ENCODE measurements at regions of chr19 and their contacts with region 1.

Region 1: DNA sequence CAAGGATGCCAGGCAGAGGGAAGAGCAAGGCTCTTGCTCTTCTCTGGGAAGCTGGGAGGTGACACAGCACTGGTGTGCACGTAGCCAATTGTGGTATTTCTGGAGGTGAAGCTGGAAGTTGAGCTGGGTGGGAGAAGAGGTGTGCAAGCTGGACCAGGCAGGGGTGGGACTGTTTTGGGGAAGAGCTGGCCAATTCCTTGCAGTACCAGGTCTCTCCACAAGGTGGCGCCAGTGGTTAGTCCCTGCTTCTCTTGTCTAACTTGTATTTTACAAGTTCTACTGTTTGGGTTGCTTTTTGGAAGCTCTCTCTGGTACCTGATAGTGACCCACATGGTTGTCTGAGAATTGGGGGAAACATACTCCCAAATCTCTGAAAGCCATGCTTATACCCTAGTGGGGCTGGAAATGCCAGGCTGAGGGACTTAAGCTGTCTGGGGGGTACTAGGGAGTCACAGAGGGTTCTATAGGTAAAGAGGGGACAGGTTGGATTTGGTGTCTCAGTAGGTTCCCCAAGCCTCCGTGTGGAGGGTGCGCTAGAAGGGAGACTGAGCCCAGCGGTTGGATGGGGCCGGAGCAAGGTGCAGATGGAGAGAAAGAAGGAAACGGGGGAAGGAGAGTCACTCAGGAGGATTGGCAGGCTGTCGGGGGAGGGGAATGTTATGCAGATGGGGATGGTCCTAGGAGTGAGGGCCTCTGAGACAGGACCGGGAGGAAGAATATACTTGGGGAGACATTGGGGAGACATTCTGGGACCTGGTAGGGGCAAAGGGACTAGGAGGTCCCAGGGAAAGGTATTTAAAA is 3.0 kb downstream of the HPN start:
- DNase-seq: no peak
- H3K4me3 ChIP-seq: no peak overlapping the region
- H3K27ac ChIP-seq: no peak overlapping the region
- H3K27me3 ChIP-seq: peaks cover 7% of the 10 kb centered on the region
- CTCF ChIP-seq: peak; percentile 94

Region 2: GRCh38 chr19:35030257-35031071 is 14.1 kb before region 1 on chr19 and contains the start of gene SCN1B:
- CTCF ChIA-PET with region 1: interaction called, 15 read pairs
- POLR2A ChIA-PET with region 1: no interaction called
- DNase-seq: no peak
- H3K4me3 ChIP-seq: peak within 1 kb of the TSS; percentile 63
- H3K27ac ChIP-seq: no peak within 1 kb of the TSS
- H3K27me3 ChIP-seq: no peaks in the 10 kb centered on the region
- CTCF ChIP-seq: no peak
- polyA plus RNA-seq, gene SCN1B: 5.7 and 5.8 TPM in 2 replicates

Region 3: DNA sequence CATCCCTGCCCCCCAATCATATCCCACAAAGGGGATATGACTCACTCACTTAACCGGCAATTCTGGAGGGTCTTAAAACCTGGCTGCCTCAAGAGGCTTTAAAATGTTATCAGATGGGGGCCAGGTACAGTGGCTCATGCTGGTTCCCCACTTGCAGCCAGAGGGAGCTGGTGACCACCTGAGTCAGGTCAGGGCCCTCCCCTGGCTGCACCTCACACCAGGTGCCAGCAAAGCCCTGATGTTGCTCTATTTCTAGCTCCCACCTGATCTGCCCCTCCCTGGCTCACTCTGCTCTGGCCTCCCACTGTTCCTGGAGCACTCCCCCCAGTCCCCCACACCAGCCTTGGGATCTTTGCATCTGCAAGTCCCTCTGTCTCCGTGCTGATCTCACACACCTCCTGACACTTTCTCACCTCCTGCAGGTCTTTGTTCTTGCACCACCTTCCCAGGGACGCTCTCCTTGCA is 11.2 kb after region 1 on chr19:
- CTCF ChIA-PET with region 1: interaction called, 17 read pairs
- POLR2A ChIA-PET with region 1: interaction called, 3 read pairs
- DNase-seq: no peak
- H3K4me3 ChIP-seq: no peak overlapping the region
- H3K27ac ChIP-seq: no peak overlapping the region
- H3K27me3 ChIP-seq: peaks cover 16% of the 10 kb centered on the region
- CTCF ChIP-seq: no peak

Region 4: DNA sequence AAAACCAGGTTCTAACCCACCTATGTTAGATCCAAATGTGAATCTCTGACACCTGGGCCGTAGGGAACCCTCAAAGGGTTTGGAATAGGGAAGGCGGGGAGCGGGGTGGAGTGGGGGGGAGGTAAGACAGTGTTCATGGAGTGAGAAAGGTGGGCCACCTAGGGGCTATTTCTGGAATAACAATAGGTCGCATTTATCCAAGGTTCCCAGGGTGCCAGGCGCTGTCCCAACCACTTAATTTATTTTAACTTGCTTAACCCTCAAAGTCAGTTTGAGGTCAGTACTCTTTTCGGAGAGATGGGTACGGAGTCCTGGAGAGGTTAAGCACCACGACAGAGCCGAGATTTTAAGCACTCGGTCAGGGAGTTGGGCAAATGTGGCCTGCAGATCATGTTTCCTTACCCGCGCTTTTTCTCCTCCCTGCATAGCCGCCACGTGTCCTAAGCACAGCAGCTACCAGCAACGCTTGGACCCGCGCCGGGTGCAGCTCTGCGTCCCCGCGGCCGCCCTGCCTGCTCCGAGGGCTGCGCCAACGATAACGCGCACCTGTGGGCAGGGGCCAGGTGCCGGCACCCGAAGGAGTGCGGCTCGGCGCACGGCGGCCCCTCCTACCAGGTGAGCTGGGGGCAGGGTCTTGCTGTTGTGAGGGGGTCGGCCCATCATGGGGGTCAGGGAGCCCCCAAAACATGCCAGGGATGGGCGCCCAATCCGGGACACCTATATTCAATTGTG is 46.2 kb after region 1 on chr19:
- CTCF ChIA-PET with region 1: interaction called, 12 read pairs
- POLR2A ChIA-PET with region 1: no interaction called
- DNase-seq: no peak
- H3K4me3 ChIP-seq: 0 out of 2 replicates have a peak overlapping the region, but pooled peaks have one; percentile 7
- H3K27ac ChIP-seq: no peak overlapping the region
- H3K27me3 ChIP-seq: peaks cover 3% of the 10 kb centered on the region
- CTCF ChIP-seq: peak; percentile 73

Region 5: GRCh38 chr19:35135389-35135909 is 90.9 kb after region 1 on chr19:
- CTCF ChIA-PET with region 1: interaction called, 31 read pairs
- POLR2A ChIA-PET with region 1: no interaction called
- DNase-seq: no peak
- H3K4me3 ChIP-seq: no peak overlapping the region
- H3K27ac ChIP-seq: no peak overlapping the region
- H3K27me3 ChIP-seq: peaks cover 12% of the 10 kb centered on the region
- CTCF ChIP-seq: peak; percentile 89

Measured in AG04450 (cell line).